ENCODE measurements at regions of chr5 and their contacts with region 1.

Region 1: DNA sequence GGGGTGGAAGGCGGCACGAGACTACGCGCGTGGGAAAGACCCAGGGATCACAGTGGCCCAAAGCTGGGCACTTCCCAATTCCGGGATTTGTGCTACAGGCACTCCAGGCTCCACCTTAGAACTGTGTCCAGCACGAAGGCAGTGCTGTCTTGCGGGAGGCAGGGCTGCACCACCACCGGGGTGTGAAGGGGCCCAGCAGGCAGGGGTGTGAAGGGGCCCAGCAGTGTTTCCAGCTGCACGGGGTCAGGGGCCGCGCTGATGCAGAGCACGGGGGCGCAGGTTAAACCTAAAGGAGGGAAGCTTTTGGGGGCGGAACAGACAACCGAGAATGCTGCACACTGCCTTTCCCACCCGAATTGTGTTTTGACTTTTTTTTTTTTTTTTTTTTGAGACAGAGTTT is 1.1 kb upstream of the PDCD6 start:
- DNase-seq: no peak
- H3K4me3 Mint-ChIP-seq: peak overlapping the region; percentile 87
- H3K27ac Mint-ChIP-seq: peak overlapping the region; percentile 67
- H3K4me1 Mint-ChIP-seq: peaks cover 33% of the 10 kb centered on the region
- H3K27me3 Mint-ChIP-seq: no peaks in the 10 kb centered on the region

Region 2: DNA sequence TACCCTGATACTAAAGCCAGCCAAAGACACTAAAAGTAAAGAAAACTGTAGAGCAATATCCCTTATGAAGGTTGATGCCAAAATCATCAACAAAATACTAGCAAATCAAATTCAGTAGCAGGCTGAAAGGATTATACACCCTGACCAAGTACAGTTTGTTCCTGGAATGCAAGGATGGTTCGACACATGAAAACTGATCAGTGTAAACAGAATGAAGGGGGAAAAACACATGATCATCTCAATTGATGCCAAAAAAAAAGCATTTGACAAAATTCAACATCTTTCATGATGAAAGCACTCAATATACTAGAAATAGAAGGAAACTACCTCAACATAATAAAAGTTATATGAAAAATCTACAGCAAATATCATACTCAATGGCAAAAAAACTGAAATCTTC is 122.6 kb before region 1 on chr5:
- intact Hi-C with region 1: no loop called
- DNase-seq: no peak
- H3K4me3 Mint-ChIP-seq: no peak overlapping the region
- H3K27ac Mint-ChIP-seq: no peak overlapping the region
- H3K4me1 Mint-ChIP-seq: no peaks in the 10 kb centered on the region
- H3K27me3 Mint-ChIP-seq: no peaks in the 10 kb centered on the region

Region 3: DNA sequence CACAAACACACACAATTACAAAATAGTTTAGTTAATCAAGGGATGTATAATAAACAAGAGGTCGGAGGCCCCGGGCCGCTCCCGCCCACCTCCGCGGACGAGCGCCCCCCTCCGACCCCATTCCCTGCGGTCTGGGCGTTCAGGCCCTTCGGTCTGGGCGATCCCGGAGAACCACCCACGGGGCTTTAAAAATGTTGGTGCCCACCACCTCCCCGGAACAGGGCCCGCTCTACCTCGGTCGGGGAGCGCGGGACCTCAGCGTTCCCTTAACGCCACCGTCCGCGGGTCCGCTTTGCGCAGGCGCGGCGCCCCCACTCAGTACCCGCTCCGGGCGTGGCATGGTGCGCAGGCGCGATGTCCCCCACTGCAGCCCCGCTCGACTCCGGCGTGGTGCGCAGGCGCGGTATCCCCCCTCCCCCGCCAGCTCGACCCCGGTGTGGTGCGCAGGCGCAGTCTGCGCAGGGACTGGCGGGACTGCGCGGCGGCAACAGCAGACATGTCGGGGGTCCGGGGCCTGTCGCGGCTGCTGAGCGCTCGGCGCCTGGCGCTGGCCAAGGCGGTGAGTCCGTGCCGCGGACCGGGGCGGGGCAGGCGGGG is 52.4 kb before region 1 on chr5 and contains the starts of genes CCDC127 and SDHA:
- intact Hi-C with region 1: loop called (anchors 1 kb)
- DNase-seq: peak; percentile 99
- H3K4me3 Mint-ChIP-seq: peak within 1 kb of the TSS; percentile 96
- H3K27ac Mint-ChIP-seq: peak within 1 kb of the TSS; percentile 94
- H3K4me1 Mint-ChIP-seq: peaks cover 61% of the 10 kb centered on the region
- H3K27me3 Mint-ChIP-seq: no peaks in the 10 kb centered on the region
- total RNA-seq, gene CCDC127: 9.5 and 10.9 TPM in 2 replicates
- total RNA-seq, gene SDHA: 135 TPM in 2 replicates

Region 4: GRCh38 chr5:378301-378891 is 108.1 kb after region 1 on chr5:
- intact Hi-C with region 1: loop called (anchors 1 kb)
- DNase-seq: peak; percentile 40
- H3K4me3 Mint-ChIP-seq: peak overlapping the region; percentile 72
- H3K27ac Mint-ChIP-seq: peak overlapping the region; percentile 91
- H3K4me1 Mint-ChIP-seq: peaks cover 71% of the 10 kb centered on the region
- H3K27me3 Mint-ChIP-seq: no peaks in the 10 kb centered on the region

Region 5: DNA sequence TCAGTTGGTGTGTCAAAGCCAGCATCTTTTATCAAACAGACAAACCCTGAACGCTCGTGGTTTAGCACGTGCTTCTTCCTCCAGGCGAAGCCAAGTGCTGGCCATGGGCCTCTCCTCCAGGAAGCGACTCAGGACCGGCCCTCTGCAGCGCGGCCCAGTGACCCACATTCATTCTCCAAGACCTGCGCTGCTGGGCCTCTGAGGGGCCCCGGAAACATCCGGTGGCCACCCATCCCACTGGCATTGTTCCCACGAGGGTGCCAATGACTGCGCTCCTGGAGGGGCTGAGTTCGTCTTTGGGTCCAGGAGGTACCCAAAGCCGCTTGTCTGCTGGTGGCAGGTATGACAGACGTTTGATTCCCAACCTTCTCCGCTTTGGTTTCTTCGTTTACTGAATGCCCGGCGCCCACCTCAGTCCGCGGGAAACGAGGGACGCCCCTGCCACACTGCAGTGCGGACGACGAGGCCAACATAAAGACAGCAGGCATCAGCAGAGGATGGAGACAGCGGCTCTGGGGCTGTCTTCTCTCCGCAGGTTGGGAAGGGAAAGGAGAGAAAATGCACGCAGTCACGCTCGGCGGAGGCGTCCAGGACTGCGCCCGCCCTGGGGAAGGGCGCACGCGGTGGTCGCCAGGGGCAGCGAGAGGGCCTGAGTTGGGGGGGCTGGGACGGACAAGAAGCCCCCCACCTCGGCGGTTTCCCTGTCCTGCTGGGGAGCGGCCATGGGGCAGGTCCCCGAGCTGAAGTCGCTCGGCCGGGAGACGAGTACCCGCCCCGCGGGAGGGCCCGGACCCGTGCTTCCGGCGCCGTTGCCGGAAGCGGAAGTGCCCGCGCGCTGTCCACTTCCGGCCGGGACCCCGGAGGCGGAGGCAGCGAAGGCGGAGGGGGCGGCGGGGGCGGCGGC is 172.2 kb after region 1 on chr5 and contains the start of gene EXOC3:
- intact Hi-C with region 1: loop called (anchors 2 kb)
- DNase-seq: peak; percentile 76
- H3K4me3 Mint-ChIP-seq: peak within 1 kb of the TSS; percentile 97
- H3K27ac Mint-ChIP-seq: peak within 1 kb of the TSS; percentile 96
- H3K4me1 Mint-ChIP-seq: peaks cover 19% of the 10 kb centered on the region
- H3K27me3 Mint-ChIP-seq: peaks cover 3% of the 10 kb centered on the region
- total RNA-seq, gene EXOC3: 59.6 and 62.0 TPM in 2 replicates